A549 (cell line): ENCODE measurements at regions of chr11 and their contacts with region 1.

Region 1: DNA sequence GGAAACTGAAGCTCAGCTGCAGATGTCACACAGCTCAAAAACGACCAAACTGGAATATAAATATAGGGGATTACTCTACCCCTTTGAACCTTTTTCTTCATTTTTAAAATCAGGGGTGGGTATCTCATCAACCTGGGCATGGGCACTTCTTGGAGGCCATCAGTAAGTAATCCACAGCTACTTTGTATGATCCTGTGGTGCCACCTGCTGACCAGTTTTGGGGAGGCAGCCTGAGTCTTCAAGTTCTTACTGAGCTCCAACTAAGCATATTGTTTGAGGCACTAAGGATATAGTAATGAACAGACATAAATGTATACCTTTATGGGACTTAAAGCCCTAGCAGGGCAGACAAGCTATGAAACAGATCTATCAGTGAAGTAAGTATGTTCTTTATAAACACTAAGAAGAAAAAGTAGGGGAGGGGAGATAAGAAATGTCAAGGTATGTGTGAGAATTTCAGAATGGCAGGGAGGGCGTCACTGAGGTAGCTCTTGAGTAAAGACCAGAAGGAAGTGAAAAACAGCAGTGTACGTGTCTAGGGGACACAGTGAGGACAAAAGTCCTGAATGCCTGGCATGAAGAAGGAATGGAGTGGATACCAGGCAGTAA is 18.4 kb downstream of the TUB start:
- DNase-seq: peak; percentile 56 to 80
- ATAC-seq: peak; percentile 82 to 92
- H3K4me3 ChIP-seq: no peak overlapping the region
- H3K27ac ChIP-seq: no peak overlapping the region
- H3K4me1 ChIP-seq: no peaks in the 10 kb centered on the region
- CTCF ChIP-seq: peak; percentile 85
- EP300 ChIP-seq: no peak
- POLR2A ChIP-seq: no peak
- RAD21 ChIP-seq: peak; percentile 86

Region 2: DNA sequence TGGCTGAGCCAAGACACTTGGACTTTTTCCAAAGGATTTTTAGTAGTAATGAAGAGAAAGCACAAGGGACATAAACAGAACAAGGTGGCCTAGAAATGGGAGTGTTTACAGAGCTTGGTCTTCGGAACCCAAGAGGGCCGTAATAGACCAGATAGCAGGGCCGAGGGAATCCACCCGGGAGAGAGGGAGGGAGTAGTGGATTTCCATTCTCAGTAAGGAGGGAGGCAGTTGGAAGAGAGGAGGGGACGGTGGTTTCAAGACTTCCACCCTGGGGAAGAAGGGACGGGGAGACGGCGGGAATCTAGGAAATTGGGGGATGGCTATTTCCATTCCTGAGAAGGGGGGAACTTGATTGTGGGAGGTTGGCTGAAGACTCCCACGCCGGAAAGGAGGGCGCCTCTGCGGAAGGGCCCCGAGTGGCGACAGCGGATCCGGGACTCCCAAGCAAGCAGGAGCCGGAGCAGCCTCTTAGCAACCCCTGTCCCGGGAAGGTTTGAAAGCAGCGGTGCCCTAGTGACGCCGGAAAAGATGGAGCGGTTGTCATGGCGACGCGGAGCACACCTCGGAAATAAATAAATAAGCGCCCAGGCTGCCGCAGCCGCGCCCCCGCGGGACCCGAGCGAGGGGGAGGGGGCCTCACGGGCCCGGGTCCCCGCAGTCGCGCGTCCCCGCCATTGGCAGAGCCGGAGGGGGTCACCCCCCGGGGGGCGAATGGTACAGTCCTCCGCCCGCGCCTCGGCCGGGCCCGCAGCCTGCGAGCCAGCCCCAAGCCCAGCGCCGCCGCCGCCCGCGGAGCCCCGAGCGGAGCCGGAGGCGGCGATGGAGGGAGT is 80.7 kb before region 1 on chr11:
- CTCF ChIA-PET with region 1: interaction called, 55 read pairs
- POLR2A ChIA-PET with region 1: no interaction called
- DNase-seq: peak; percentile 32 to 51
- ATAC-seq: peak; percentile 75 to 83
- H3K4me3 ChIP-seq: peak overlapping the region; percentile 61
- H3K27ac ChIP-seq: peak overlapping the region in 1 of 2 experiments; percentile 71; a peak in 3 of 6 replicates
- H3K4me1 ChIP-seq: no peaks in the 10 kb centered on the region; the same call in 2 of the 3 replicates
- CTCF ChIP-seq: no peak
- EP300 ChIP-seq: no peak
- POLR2A ChIP-seq: no peak
- RAD21 ChIP-seq: no peak

Region 3: GRCh38 chr11:8033305-8034105 is 65.9 kb before region 1 on chr11:
- CTCF ChIA-PET with region 1: interaction called, 644 read pairs
- POLR2A ChIA-PET with region 1: interaction called, 4 read pairs
- DNase-seq: peak; percentile 58 to 70
- ATAC-seq: peak; percentile 70 to 92; a peak in 5 of 6 replicates
- H3K4me3 ChIP-seq: no peak overlapping the region
- H3K27ac ChIP-seq: no peak overlapping the region
- H3K4me1 ChIP-seq: no peaks in the 10 kb centered on the region
- CTCF ChIP-seq: peak; percentile 84
- EP300 ChIP-seq: no peak
- POLR2A ChIP-seq: no peak
- RAD21 ChIP-seq: peak; percentile 74 to 79

Region 4: DNA sequence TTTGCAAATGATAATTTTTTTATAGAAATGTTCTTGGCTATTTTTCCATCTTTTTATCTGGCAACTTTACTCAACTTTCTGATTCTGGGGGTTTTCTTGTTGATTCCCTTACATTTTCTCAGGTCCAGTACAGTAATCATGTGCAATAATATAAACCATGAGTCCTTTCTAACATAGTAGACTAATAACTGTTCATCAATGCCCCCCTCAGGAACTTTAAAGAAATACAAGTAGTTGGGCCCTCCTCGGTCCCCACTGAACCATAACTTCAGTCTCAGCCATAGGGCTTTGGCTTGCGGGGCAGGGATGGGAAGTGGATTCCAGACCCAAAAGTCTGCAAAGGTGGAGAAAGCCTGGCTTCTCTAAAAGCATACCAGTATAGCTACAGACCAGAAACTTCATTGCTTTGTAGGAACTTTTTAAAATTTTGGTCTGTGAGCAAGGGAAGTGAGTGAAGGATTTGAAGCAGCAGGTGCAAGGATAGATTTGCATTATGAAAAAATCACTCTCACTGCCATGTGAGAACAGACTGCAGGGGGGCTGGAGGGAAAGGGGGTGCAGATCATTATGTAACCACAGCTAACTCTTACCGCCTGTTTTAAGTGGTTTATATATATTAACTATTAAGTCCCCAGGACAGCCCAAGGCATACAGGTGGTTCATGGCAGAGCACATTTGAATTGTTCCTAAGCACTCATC is 28.8 kb before region 1 on chr11:
- CTCF ChIA-PET with region 1: interaction called, 17 read pairs
- POLR2A ChIA-PET with region 1: no interaction called
- DNase-seq: peak; percentile 34 to 84
- ATAC-seq: peak; percentile 65 to 82
- H3K4me3 ChIP-seq: no peak overlapping the region
- H3K27ac ChIP-seq: no peak overlapping the region
- H3K4me1 ChIP-seq: peaks cover 18% of the 10 kb centered on the region
- CTCF ChIP-seq: peak; percentile 28
- EP300 ChIP-seq: no peak
- POLR2A ChIP-seq: no peak
- RAD21 ChIP-seq: peak; percentile 44 to 52

Region 5: DNA sequence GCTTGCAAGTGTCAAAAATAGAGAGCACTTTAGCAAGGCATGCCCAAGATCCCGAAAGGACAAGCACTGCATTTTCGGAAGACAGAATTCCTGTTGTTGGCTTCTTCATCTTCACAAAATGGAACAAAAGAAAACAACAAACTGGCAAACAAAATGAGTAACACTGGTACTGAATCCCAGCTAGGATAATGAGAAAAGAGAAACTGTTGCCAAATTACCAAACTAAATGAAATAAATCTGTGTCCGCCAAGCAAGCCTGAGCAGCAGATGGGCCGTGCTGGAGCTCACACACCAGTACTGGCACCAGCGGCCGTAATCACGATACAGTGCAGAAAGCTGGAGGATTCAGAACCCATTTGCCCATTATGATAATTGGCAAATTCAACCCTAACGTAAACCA is 12.2 kb after region 1 on chr11:
- CTCF ChIA-PET with region 1: interaction called, 62 read pairs
- POLR2A ChIA-PET with region 1: no interaction called
- DNase-seq: no peak
- ATAC-seq: no peak
- H3K4me3 ChIP-seq: no peak overlapping the region
- H3K27ac ChIP-seq: no peak overlapping the region
- H3K4me1 ChIP-seq: no peaks in the 10 kb centered on the region
- CTCF ChIP-seq: no peak
- EP300 ChIP-seq: no peak
- POLR2A ChIP-seq: no peak
- RAD21 ChIP-seq: no peak

Region 6: GRCh38 chr11:8225589-8226036 is 126.2 kb after region 1 on chr11:
- CTCF ChIA-PET with region 1: no interaction called
- POLR2A ChIA-PET with region 1: no interaction called
- DNase-seq: peak; percentile 58 to 88
- ATAC-seq: peak; percentile 32 to 85; a peak in 4 of 6 replicates
- H3K4me3 ChIP-seq: no peak overlapping the region
- H3K27ac ChIP-seq: 0 out of 6 replicates have a peak overlapping the region, but pooled peaks of 1 of the 2 experiments have one; percentile 24
- H3K4me1 ChIP-seq: peaks cover 26% of the 10 kb centered on the region
- CTCF ChIP-seq: peak; percentile 91
- EP300 ChIP-seq: no peak
- POLR2A ChIP-seq: no peak
- RAD21 ChIP-seq: peak; percentile 94 to 95

Region 7: DNA sequence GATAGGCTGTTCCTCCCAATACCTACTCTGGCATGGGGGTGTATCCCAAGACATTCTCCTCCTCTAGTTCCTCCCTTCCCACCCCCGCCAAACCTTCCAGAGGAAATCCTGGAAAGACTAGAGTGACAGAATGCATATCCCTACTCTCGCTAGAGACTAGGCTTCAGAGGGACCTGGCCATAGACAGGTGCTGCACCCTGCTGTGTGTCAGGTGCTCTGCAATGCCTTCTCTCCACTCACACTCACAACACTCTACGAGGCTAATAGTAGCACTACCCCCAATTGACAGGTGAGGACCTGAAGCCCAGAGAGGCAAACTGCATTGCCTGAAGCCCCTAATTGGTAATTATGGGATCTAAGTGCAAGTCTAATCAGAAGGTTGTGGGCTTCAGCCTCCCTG is 210.5 kb after region 1 on chr11:
- CTCF ChIA-PET with region 1: no interaction called
- POLR2A ChIA-PET with region 1: no interaction called
- DNase-seq: peak in 1 of 2 experiments; percentile 17
- ATAC-seq: peak; percentile 55 to 69; a peak in 2 of 6 replicates
- H3K4me3 ChIP-seq: no peak overlapping the region
- H3K27ac ChIP-seq: no peak overlapping the region
- H3K4me1 ChIP-seq: no peaks in the 10 kb centered on the region
- CTCF ChIP-seq: no peak
- EP300 ChIP-seq: no peak
- POLR2A ChIP-seq: no peak
- RAD21 ChIP-seq: peak; percentile 14 to 31; a peak in 1 of 5 replicates